Mammary epithelial cell (primary cell): ENCODE measurements at regions of chr20 and their contacts with region 1.

Region 1: DNA sequence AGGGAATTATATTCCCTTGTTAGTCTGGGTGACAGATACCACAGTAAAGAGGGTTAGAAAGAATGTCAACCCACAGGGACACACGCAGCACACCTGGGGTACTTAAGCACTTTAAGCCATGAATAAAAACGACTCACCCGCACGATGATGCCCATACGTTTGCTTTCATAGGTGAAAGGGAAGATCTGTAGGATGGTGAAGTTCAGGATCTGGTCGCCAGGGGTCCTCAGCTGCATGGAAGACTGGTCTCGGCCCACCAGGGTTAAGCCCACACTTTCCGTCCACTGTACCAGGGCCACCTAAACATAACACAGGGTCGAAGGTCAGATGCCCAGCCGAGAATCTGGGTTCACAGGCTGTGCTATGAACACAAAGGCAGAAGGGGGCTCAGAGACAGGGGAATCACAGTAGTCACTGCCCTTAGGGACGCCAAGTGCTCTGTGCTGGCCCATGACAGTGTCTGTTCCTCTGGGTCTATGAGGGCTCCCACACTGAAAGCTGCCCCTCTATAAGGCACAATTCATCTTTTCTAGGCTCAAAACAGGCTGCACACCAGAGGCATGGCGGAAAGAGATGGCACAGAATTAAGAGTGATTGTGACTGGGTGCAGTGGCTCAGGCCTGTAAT is 96.8 kb upstream of the NFATC2 start:
- DNase-seq: peak; percentile 37
- H3K4me3 ChIP-seq: no peak overlapping the region
- H3K27ac ChIP-seq: no peak overlapping the region
- H3K4me1 ChIP-seq: no peaks in the 10 kb centered on the region
- H3K27me3 ChIP-seq: no peaks in the 10 kb centered on the region
- CTCF ChIP-seq: peak; percentile 75 to 80

Region 2: GRCh38 chr20:51712501-51713197 is 73.3 kb after region 1 on chr20:
- CTCF ChIA-PET with region 1: no interaction called
- dilution Hi-C with region 1: loop called (anchors 10 kb)
- in situ Hi-C with region 1: no loop called
- intact Hi-C with region 1: no loop called
- DNase-seq: no peak
- H3K4me3 ChIP-seq: no peak overlapping the region
- H3K27ac ChIP-seq: no peak overlapping the region
- H3K4me1 ChIP-seq: no peaks in the 10 kb centered on the region
- H3K27me3 ChIP-seq: no peaks in the 10 kb centered on the region
- CTCF ChIP-seq: peak; percentile 19 to 33

Region 3: DNA sequence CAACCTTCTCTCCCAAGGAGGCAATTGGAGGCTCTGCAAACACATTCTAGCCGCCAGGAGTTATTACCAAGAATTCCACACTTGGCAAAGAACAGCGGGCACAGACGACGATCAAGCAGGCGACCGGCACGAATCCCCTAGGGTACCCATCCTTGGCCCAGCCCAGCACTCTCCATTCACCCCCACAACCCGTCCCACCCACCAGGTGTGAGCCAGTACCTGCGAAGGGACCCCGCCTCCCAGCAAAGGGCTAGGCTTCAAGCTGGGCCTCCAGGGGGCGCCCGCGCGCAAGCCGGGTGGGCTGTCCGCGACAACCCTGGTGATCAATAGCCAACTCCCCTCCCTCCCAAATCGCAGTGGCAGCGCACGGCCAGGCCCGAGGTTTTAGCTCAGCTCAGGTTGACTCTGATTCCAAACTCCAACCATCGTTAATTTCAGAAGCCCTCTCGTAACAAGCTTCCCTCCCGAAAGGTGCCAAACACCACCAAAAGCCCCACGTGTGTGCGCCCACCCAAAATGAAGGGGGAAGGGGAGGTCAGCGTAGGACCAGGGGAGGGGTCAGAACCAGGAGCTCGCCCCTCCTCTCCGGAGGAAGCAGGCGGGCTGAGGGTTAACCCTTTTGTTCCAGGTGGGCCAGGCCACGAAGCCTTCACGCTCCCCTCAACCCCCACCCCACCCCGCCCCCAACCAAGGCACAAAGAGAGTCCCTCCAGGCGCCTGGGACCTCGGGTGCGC is 160.9 kb after region 1 on chr20:
- CTCF ChIA-PET with region 1: no interaction called
- dilution Hi-C with region 1: no loop called
- in situ Hi-C with region 1: no loop called
- intact Hi-C with region 1: loop called (anchors 2 kb)
- DNase-seq: peak; percentile 8
- H3K4me3 ChIP-seq: peak overlapping the region; percentile 31 to 42 (median 31)
- H3K27ac ChIP-seq: no peak overlapping the region
- H3K4me1 ChIP-seq: peaks cover 7% of the 10 kb centered on the region
- H3K27me3 ChIP-seq: peaks cover 17% of the 10 kb centered on the region
- CTCF ChIP-seq: peak; percentile 61 to 93

Region 4: GRCh38 chr20:52083627-52084232 is 444.4 kb after region 1 on chr20:
- CTCF ChIA-PET with region 1: no interaction called
- dilution Hi-C with region 1: no loop called
- in situ Hi-C with region 1: loop called (anchors 5 to 10 kb)
- intact Hi-C with region 1: loop called (anchors 1 kb)
- DNase-seq: peak; percentile 25
- H3K4me3 ChIP-seq: no peak overlapping the region
- H3K27ac ChIP-seq: no peak overlapping the region
- H3K4me1 ChIP-seq: no peaks in the 10 kb centered on the region
- H3K27me3 ChIP-seq: no peaks in the 10 kb centered on the region
- CTCF ChIP-seq: peak; percentile 55 to 77